ENCODE measurements at regions of chr11 and their contacts with region 1.

Region 1: DNA sequence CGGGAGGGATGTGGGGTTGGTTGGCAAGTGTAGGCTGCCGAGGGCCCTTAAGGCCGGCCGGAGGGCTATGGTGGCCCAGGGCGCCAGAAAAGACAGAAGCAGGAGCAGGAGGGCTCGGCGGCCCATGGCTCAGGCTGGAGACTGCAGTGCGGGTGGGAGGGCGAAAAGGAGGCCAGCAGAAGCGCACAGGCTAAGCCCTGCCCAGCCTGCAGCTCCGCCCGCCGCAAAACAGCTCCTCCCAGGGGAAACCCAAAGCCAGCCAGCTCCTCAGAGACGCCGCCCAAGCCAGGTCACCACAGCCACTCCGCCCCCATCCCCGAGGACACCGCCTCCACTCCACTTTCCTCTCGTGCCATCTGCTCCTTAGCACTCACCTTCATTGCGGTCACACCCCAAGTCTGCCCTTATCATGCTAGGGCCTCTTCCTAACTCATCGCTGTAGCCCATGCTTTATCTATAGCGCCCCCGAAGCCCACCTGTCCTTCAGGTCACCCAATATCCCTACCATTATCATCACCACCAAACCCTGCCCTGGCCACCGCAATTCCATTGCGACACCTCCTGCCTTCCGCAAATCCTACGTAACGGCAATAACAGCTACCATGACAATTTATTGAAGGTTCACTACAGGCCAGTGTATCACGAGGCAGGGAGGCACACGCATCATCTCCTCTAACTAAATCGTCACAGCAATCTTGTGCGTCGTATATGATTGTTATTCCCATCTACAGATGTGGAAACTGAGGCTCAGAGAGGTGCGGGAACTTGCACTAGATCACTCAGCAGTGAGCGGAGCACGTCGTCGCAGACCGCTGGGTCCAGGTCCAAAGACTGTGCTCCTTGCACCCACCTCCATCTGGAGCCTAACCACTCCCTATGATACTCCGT is at the start of gene PRCP:
- DNase-seq: peak; percentile 91
- H3K4me3 Mint-ChIP-seq: peak within 1 kb of the TSS; percentile 88
- H3K27ac Mint-ChIP-seq: peak within 1 kb of the TSS; percentile 95
- H3K4me1 Mint-ChIP-seq: peaks cover 38% of the 10 kb centered on the region
- H3K27me3 Mint-ChIP-seq: no peaks in the 10 kb centered on the region
- CTCF ChIP-seq: no peak
- total RNA-seq, gene PRCP: 17.3 and 22.7 TPM in 2 replicates

Region 2: DNA sequence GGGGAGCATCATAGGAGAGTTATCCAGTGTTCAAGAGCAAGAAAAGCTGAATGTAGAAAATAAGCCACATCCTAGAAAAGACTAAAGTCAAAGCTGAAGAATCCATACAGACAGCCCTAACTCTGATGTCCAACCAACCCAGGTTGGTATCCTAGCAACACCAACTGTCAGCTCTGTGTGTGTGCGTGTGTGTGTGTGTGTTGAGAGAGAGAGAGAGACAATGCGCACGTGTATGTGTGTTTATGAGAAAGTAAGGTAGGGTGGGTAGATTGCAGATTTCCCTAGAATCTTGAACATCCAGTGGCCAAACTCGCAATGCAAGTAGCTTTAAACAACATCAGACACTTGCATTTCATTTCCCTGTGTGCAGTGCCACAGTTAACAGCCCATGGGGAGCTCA is 441.8 kb before region 1 on chr11:
- CTCF ChIA-PET with region 1: no interaction called
- POLR2A ChIA-PET with region 1: no interaction called
- intact Hi-C with region 1: no loop called
- DNase-seq: no peak
- H3K4me3 Mint-ChIP-seq: no peak overlapping the region
- H3K27ac Mint-ChIP-seq: no peak overlapping the region
- H3K4me1 Mint-ChIP-seq: no peaks in the 10 kb centered on the region
- H3K27me3 Mint-ChIP-seq: peaks cover 53% of the 10 kb centered on the region
- CTCF ChIP-seq: no peak

Region 3: GRCh38 chr11:82858556-82859091 is 41.9 kb before region 1 on chr11:
- CTCF ChIA-PET with region 1: interaction called, 3 read pairs
- POLR2A ChIA-PET with region 1: interaction called, 17 read pairs
- intact Hi-C with region 1: no loop called
- DNase-seq: peak; percentile 55
- H3K4me3 Mint-ChIP-seq: peak overlapping the region; percentile 0
- H3K27ac Mint-ChIP-seq: peak overlapping the region; percentile 83
- H3K4me1 Mint-ChIP-seq: peaks cover 24% of the 10 kb centered on the region
- H3K27me3 Mint-ChIP-seq: no peaks in the 10 kb centered on the region
- CTCF ChIP-seq: no peak

Region 4: GRCh38 chr11:82883853-82884252 is 16.7 kb before region 1 on chr11:
- CTCF ChIA-PET with region 1: interaction called, 4 read pairs
- POLR2A ChIA-PET with region 1: interaction called, 11 read pairs
- intact Hi-C with region 1: no loop called
- DNase-seq: no peak
- H3K4me3 Mint-ChIP-seq: no peak overlapping the region
- H3K27ac Mint-ChIP-seq: no peak overlapping the region
- H3K4me1 Mint-ChIP-seq: no peaks in the 10 kb centered on the region
- H3K27me3 Mint-ChIP-seq: no peaks in the 10 kb centered on the region
- CTCF ChIP-seq: no peak

Region 5: DNA sequence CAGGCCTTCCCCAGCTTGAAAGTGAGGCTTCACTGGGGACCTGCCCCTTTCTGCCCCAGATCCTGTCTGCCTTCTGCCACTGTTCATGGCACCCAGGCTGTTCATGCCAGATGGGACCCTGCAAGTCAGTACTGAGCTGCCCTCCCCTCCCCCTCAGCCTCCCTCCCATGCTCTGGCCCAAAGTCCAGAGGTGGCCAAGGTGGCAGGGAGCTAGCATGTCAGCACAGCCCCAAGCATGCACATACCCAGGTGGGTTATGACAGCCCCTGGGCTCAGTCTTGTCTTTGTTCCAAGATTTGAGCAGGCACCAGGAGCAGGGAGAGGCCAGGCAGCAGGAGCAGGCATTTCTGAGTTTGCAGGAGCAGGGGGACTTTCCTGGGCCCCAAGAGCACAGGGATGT is 45.2 kb after region 1 on chr11:
- CTCF ChIA-PET with region 1: no interaction called
- POLR2A ChIA-PET with region 1: no interaction called
- intact Hi-C with region 1: no loop called
- DNase-seq: no peak
- H3K4me3 Mint-ChIP-seq: no peak overlapping the region
- H3K27ac Mint-ChIP-seq: no peak overlapping the region
- H3K4me1 Mint-ChIP-seq: no peaks in the 10 kb centered on the region
- H3K27me3 Mint-ChIP-seq: no peaks in the 10 kb centered on the region
- CTCF ChIP-seq: no peak

Region 6: GRCh38 chr11:83285771-83286528 is 385.4 kb after region 1 on chr11 and contains the start of gene CCDC90B:
- CTCF ChIA-PET with region 1: no interaction called
- POLR2A ChIA-PET with region 1: interaction called, 40 read pairs
- intact Hi-C with region 1: loop called (anchors 1 kb)
- DNase-seq: peak; percentile 97
- H3K4me3 Mint-ChIP-seq: peak within 1 kb of the TSS; percentile 90
- H3K27ac Mint-ChIP-seq: peak within 1 kb of the TSS; percentile 99
- H3K4me1 Mint-ChIP-seq: peaks cover 10% of the 10 kb centered on the region
- H3K27me3 Mint-ChIP-seq: no peaks in the 10 kb centered on the region
- CTCF ChIP-seq: peak; percentile 6
- total RNA-seq, gene CCDC90B: 69.1 and 72.9 TPM in 2 replicates

Region 7: DNA sequence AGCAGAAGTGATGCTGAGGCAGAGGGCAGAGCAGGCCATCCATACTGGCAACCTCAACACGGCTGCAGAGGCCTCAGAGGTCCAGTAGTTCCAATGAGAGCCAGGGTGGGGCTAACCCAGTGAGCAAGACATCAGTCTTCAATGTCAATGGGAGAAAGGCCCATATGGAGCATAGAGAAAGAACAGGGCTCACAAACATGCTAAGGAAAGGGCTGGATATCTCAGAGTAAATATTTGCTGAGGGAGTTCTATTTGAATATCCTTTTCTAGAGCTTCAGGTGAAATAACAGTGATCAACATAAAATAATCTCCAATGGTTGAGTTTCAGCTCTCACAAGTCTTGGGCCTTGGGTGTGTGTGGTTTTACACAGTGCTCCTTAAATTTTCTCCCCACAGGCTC is 436.5 kb after region 1 on chr11:
- CTCF ChIA-PET with region 1: no interaction called
- POLR2A ChIA-PET with region 1: no interaction called
- intact Hi-C with region 1: no loop called
- DNase-seq: no peak
- H3K4me3 Mint-ChIP-seq: no peak overlapping the region
- H3K27ac Mint-ChIP-seq: no peak overlapping the region
- H3K4me1 Mint-ChIP-seq: no peaks in the 10 kb centered on the region
- H3K27me3 Mint-ChIP-seq: no peaks in the 10 kb centered on the region
- CTCF ChIP-seq: no peak